HepG2 (cell line): ENCODE measurements at regions of chr9 and their contacts with region 1.

Region 1: DNA sequence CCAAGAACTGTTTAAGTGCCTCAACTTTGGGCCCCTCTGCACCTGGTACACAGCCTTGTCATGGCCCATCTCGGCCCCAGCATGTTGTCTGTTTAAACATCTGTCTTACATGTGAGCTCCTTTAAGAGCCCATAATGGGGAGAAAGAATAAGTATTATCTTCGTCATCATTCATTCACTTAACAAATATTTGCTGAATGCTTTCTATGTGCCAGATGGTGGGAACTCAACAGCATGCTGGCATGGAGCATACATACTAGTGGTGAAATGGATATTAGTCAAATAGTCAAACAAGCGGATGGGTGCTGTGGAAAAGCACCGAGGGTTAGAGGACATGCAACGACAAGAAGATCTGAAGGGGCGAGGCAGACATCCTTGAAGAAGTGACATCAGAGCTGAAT is 54.5 kb downstream of the GABBR2 start:
- DNase-seq: no peak
- ATAC-seq: no peak
- H3K4me3 ChIP-seq: no peak overlapping the region
- H3K27ac ChIP-seq: no peak overlapping the region
- H3K4me1 ChIP-seq: no peaks in the 10 kb centered on the region
- H3K27me3 ChIP-seq: no peaks in the 10 kb centered on the region; a peak in 2 of 5 replicates
- CTCF ChIP-seq: no peak
- EP300 ChIP-seq: no peak
- POLR2A ChIP-seq: no peak
- RAD21 ChIP-seq: no peak

Region 2: DNA sequence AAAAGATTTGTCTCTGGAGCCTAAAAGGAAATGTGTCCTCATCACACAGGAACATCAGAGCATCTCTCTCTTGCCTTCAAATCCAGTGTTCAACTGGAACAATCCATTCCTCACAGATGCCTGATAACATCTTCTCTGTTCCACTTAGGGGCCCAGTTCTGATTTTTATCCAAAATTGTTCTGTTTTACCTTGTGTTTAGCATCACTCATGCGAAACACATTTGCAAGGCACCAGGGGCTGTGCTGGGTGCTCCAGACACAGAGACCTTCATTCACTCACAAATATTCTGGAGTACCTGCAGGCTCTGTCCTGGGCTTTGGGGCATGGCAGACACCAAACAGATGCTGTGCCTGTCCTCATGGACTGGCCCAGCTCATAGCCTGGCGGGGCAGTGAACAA is 40.7 kb after region 1 on chr9:
- CTCF ChIA-PET with region 1: no interaction called
- POLR2A ChIA-PET with region 1: no interaction called
- in situ Hi-C with region 1: no loop called
- intact Hi-C with region 1: no loop called
- DNase-seq: no peak
- ATAC-seq: no peak
- H3K4me3 ChIP-seq: no peak overlapping the region
- H3K27ac ChIP-seq: no peak overlapping the region
- H3K4me1 ChIP-seq: no peaks in the 10 kb centered on the region
- H3K27me3 ChIP-seq: peaks cover 0 to 25% of the 10 kb centered on the region in 2 experiments; a peak in 4 of 5 replicates
- CTCF ChIP-seq: no peak
- EP300 ChIP-seq: no peak
- POLR2A ChIP-seq: no peak
- RAD21 ChIP-seq: no peak

Region 3: GRCh38 chr9:98707166-98708102 is 53.2 kb after region 1 on chr9:
- CTCF ChIA-PET with region 1: no interaction called
- POLR2A ChIA-PET with region 1: no interaction called
- in situ Hi-C with region 1: no loop called
- intact Hi-C with region 1: loop called (anchors 2 kb)
- DNase-seq: peak; percentile 17
- ATAC-seq: peak; percentile 93
- H3K4me3 ChIP-seq: no peak overlapping the region
- H3K27ac ChIP-seq: no peak overlapping the region
- H3K4me1 ChIP-seq: peaks cover 8% of the 10 kb centered on the region
- H3K27me3 ChIP-seq: peaks cover 2 to 39% of the 10 kb centered on the region in 2 experiments; a peak in 4 of 5 replicates
- CTCF ChIP-seq: peak; percentile 79
- EP300 ChIP-seq: no peak
- POLR2A ChIP-seq: no peak
- RAD21 ChIP-seq: peak; percentile 68

Region 4: GRCh38 chr9:99253772-99254431 is 599.7 kb after region 1 on chr9:
- CTCF ChIA-PET with region 1: no interaction called
- POLR2A ChIA-PET with region 1: no interaction called
- in situ Hi-C with region 1: no loop called
- intact Hi-C with region 1: no loop called
- DNase-seq: no peak
- ATAC-seq: peak; percentile 48
- H3K4me3 ChIP-seq: no peak overlapping the region
- H3K27ac ChIP-seq: no peak overlapping the region
- H3K4me1 ChIP-seq: no peaks in the 10 kb centered on the region
- H3K27me3 ChIP-seq: peaks cover 0 to 3% of the 10 kb centered on the region in 2 experiments; a peak in 1 of 5 replicates
- CTCF ChIP-seq: no peak
- EP300 ChIP-seq: no peak
- POLR2A ChIP-seq: no peak
- RAD21 ChIP-seq: no peak

Region 5: GRCh38 chr9:99579964-99580363 is 925.7 kb after region 1 on chr9:
- CTCF ChIA-PET with region 1: no interaction called
- POLR2A ChIA-PET with region 1: no interaction called
- in situ Hi-C with region 1: no loop called
- intact Hi-C with region 1: no loop called
- DNase-seq: no peak
- ATAC-seq: no peak
- H3K4me3 ChIP-seq: no peak overlapping the region
- H3K27ac ChIP-seq: no peak overlapping the region
- H3K4me1 ChIP-seq: no peaks in the 10 kb centered on the region
- H3K27me3 ChIP-seq: no peaks in the 10 kb centered on the region; a peak in 1 of 5 replicates
- CTCF ChIP-seq: no peak
- EP300 ChIP-seq: no peak
- POLR2A ChIP-seq: no peak
- RAD21 ChIP-seq: no peak